ENCODE measurements at regions of chr11 and their contacts with region 1.

Region 1: DNA sequence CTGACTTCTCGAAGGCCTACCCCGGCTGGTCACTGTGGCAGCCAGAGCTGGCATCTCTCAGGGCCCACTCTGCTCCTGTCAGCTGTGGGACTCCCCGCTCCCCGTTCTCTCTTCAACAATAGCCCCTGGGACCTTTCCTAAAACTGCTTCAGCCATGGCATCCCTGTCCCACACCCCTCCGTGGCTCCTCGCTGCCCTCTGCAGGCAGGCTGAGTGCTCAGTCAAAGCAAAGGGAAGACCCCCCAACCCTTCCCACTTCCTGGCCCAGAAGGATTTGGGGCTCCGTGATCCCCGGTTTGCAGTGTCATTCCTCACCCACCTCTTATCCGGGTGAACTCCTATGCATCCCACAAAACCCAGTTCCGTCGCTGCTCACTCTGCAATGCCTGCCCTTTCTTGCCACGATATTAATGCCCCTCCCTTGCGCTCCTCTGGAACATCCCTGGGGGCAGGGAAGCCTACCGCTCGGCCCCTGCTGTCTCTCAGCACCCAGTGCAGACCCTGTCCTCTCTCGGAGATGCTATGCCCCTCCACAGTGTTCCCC is 1.6 kb upstream of the TH start:
- DNase-seq: no peak
- H3K4me3 ChIP-seq: no peak overlapping the region
- H3K4me3 Mint-ChIP-seq: no peak overlapping the region
- H3K27ac Mint-ChIP-seq: no peak overlapping the region
- H3K4me1 ChIP-seq: peaks cover 7% of the 10 kb centered on the region
- H3K4me1 Mint-ChIP-seq: peaks cover under 1% of the 10 kb centered on the region
- H3K27me3 ChIP-seq: no peaks in the 10 kb centered on the region
- H3K27me3 Mint-ChIP-seq: no peaks in the 10 kb centered on the region
- CTCF ChIP-seq: peak; percentile 63 to 73

Region 2: GRCh38 chr11:2099516-2100340 is 73.5 kb before region 1 on chr11:
- CTCF ChIA-PET with region 1: no interaction called
- POLR2A ChIA-PET with region 1: no interaction called
- intact Hi-C with region 1: no loop called
- DNase-seq: no peak
- H3K4me3 ChIP-seq: no peak overlapping the region
- H3K4me3 Mint-ChIP-seq: no peak overlapping the region
- H3K27ac Mint-ChIP-seq: peak overlapping the region; percentile 37
- H3K4me1 ChIP-seq: no peaks in the 10 kb centered on the region
- H3K4me1 Mint-ChIP-seq: no peaks in the 10 kb centered on the region
- H3K27me3 ChIP-seq: no peaks in the 10 kb centered on the region
- H3K27me3 Mint-ChIP-seq: no peaks in the 10 kb centered on the region
- CTCF ChIP-seq: no peak

Region 3: GRCh38 chr11:2186669-2187279 is 13.6 kb after region 1 on chr11:
- CTCF ChIA-PET with region 1: interaction called, 10 read pairs
- POLR2A ChIA-PET with region 1: no interaction called
- intact Hi-C with region 1: no loop called
- DNase-seq: peak in 1 of 2 experiments; percentile 71
- H3K4me3 ChIP-seq: no peak overlapping the region
- H3K4me3 Mint-ChIP-seq: no peak overlapping the region
- H3K27ac Mint-ChIP-seq: no peak overlapping the region
- H3K4me1 ChIP-seq: peaks cover 10% of the 10 kb centered on the region; the same call in 1 of the 2 replicates
- H3K4me1 Mint-ChIP-seq: no peaks in the 10 kb centered on the region
- H3K27me3 ChIP-seq: no peaks in the 10 kb centered on the region
- H3K27me3 Mint-ChIP-seq: no peaks in the 10 kb centered on the region
- CTCF ChIP-seq: peak; percentile 69 to 82

Measured in Caco-2 (cell line).